ENCODE measurements at regions of chr2 and their contacts with region 1.

Region 1: GRCh38 chr2:61910603-61911002 is 5.1 kb downstream of the COMMD1 start:
- DNase-seq: no peak
- H3K27ac ChIP-seq: no peak overlapping the region
- CTCF ChIP-seq: no peak; the same call in 1 of the 2 replicates

Region 2: GRCh38 chr2:62001431-62001830 is 90.8 kb after region 1 on chr2:
- CTCF ChIA-PET with region 1: no interaction called
- POLR2A ChIA-PET with region 1: interaction called, 13 read pairs
- DNase-seq: no peak
- H3K27ac ChIP-seq: no peak overlapping the region
- CTCF ChIP-seq: no peak